Activated CD8-positive, alpha-beta T cell treated with anti-CD3 and anti-CD28 coated beads for 36 hours (primary cell): ENCODE measurements at regions of chr16 and their contacts with region 1.

Region 1: DNA sequence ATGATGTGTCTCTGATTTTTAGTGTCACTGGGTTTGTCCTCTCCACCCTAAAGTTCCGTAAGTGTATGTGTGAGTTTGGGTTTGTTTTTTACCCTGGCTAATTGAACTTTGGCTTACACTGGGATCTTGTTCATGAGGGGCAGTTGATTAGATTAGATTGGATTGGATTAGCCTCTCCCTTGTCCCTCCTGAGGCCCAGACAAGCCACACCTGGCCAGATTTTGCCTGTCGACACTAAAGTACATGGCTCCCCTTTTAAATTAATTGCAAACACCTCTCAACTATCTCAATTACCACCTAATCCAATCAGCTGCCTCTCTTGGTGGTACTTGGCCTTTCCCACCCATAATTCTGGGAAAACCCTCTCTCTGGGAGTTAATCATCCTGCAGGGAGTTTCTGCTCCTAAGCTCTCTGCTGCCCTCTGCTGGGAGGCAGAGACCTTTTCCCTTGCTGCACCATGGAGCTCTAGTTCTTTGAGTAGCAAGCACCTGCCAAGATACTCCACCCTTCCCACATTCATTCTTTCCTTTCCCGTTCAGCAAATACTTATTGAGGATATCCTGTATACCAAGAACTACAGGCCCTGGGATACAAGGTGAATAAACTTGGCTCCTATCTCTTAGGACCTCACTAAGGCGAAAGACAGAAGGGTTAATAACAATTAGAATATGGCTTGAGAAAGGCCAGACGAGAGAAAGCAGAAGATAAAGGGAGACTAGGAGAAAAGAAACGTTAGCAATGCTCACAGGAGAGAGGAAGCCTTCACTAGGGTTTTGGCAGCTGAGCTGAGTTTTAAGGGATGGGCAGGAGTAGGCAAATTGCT is 60.0 kb upstream of the MPHOSPH6 start:
- DNase-seq: peak; percentile 73
- ATAC-seq: no peak
- H3K4me3 Mint-ChIP-seq: no peak overlapping the region
- H3K27ac Mint-ChIP-seq: no peak overlapping the region
- H3K4me1 Mint-ChIP-seq: no peaks in the 10 kb centered on the region
- H3K27me3 Mint-ChIP-seq: peaks cover 12% of the 10 kb centered on the region
- CTCF ChIP-seq: peak; percentile 98

Region 2: DNA sequence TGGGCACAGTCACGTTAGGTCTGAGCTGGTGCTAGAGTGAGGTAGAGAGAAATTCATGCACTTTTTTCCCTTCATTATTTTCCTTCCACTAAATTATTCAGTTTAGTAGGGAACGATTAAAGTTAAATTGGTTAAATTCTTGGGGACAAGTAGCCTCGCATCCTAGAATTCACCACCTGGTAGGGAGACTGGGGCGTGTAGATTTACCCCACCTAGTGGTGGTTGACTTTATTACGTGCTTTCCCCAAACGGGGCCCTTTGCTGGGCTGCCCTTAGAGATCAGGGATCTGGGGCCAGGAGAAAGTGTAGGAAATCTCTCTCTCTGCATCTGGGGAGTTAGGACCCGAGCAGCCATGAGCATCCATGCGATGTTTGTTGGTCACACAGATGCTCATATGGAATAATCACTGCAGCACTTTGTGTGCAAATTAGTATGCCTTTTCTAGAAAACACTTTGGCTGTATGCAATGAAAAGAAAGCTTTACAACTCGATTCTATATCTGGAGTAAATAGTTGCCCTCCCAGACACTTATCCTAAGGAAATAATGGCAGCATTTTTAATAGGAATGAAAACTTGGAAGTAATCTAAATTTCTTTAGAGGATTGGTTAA is 343.9 kb before region 1 on chr16:
- CTCF ChIA-PET with region 1: interaction called, 14 read pairs
- POLR2A ChIA-PET with region 1: no interaction called
- intact Hi-C with region 1: loop called (anchors 5 kb)
- DNase-seq: peak; percentile 22
- ATAC-seq: peak; percentile 81
- H3K4me3 Mint-ChIP-seq: no peak overlapping the region
- H3K27ac Mint-ChIP-seq: no peak overlapping the region
- H3K4me1 Mint-ChIP-seq: no peaks in the 10 kb centered on the region
- H3K27me3 Mint-ChIP-seq: no peaks in the 10 kb centered on the region
- CTCF ChIP-seq: peak; percentile 83

Region 3: GRCh38 chr16:81891736-81892357 is 338.2 kb before region 1 on chr16:
- CTCF ChIA-PET with region 1: interaction called, 14 read pairs
- POLR2A ChIA-PET with region 1: no interaction called
- intact Hi-C with region 1: loop called (anchors 5 kb)
- DNase-seq: no peak
- ATAC-seq: no peak
- H3K4me3 Mint-ChIP-seq: no peak overlapping the region
- H3K27ac Mint-ChIP-seq: no peak overlapping the region
- H3K4me1 Mint-ChIP-seq: no peaks in the 10 kb centered on the region
- H3K27me3 Mint-ChIP-seq: no peaks in the 10 kb centered on the region
- CTCF ChIP-seq: no peak

Region 4: DNA sequence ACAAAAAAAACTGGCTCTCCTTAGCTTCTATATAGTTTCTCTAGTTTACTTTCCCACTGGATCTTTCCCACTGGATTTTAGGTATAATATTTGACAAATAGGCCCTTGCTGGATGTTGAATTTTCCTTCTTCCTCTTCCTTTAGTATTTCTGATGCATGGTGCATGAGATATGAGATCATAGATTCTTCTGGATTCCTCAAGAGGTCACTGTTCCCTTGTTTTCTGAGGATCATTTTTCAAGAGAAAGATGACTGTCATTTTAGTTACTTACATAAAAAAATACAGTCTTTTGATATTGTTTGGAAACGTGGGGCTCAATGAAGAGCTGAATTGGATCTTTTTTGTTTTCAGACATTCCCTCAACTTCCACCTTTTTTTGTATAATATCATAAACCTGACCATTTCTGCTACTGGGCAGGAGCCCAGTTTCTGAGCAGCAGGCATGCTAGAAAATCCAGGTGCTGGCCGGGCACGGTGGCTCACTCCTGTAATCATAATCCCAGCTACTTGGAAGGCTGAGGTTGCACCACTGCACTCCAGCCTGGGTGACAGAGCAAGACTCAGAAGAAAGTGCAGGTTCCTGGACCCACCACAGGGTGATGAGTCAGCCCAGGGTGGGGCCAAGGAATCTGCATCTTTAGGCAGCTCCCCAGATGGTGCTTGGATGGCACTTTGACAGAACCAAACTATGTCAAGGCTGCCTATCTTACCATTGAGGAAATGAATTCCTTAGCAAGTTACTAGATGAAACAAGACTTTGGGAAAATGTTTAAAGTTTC is 289.0 kb before region 1 on chr16:
- CTCF ChIA-PET with region 1: interaction called, 6 read pairs
- POLR2A ChIA-PET with region 1: no interaction called
- intact Hi-C with region 1: loop called (anchors 10 kb)
- DNase-seq: peak; percentile 7
- ATAC-seq: no peak
- H3K4me3 Mint-ChIP-seq: no peak overlapping the region
- H3K27ac Mint-ChIP-seq: no peak overlapping the region
- H3K4me1 Mint-ChIP-seq: no peaks in the 10 kb centered on the region
- H3K27me3 Mint-ChIP-seq: no peaks in the 10 kb centered on the region
- CTCF ChIP-seq: peak; percentile 50

Region 5: DNA sequence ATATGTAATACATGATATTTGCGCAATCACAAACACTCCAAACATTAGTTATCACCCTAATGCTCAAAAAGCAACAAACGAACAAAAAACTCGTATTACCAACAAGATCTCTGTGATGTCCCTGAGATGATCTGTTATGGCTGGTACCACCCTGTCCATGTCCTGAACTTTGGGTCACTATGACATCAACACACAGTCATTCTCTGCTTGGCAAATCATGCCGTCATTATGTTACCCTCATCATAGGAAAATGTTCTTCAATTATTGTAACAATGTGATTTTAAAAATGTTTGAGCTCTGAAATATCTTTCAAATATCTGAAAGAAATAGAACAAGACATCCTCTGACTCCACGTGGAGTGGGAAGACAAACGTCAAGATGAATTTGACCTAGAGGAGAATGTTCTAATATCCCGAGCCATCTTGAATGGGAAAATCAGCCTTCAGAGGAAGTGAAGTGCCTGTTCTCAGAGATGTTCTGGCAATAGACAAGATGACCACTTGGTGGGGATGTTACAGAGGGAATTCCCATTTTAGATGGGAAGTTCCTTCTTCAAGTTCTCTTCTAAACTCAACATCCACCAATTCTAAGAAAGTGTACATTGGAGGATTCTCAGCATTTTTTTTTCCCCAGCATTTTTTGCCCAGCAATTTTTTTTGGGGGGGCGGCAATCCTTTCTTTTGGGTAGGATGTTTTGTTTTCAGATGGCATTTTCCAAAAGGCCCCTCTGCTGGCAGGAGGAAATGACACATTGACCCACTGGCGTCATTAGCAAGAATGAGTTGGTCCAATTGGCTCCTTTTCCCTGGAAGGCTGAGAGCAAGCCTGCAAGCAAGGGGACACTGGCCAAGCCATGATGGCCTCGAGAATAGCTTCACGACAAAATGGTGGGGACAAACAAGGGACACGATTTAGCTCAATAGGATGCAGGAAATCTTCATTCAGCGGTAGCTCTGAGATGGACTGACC is 198.6 kb before region 1 on chr16:
- CTCF ChIA-PET with region 1: interaction called, 8 read pairs
- POLR2A ChIA-PET with region 1: no interaction called
- intact Hi-C with region 1: loop called (anchors 10 kb)
- DNase-seq: no peak
- ATAC-seq: no peak
- H3K4me3 Mint-ChIP-seq: no peak overlapping the region
- H3K27ac Mint-ChIP-seq: no peak overlapping the region
- H3K4me1 Mint-ChIP-seq: no peaks in the 10 kb centered on the region
- H3K27me3 Mint-ChIP-seq: peaks cover 6% of the 10 kb centered on the region
- CTCF ChIP-seq: peak; percentile 27

Region 6: GRCh38 chr16:82169861-82170845 is 59.9 kb before region 1 on chr16 and contains the start of gene MPHOSPH6:
- CTCF ChIA-PET with region 1: interaction called, 18 read pairs
- POLR2A ChIA-PET with region 1: no interaction called
- intact Hi-C with region 1: no loop called
- DNase-seq: peak; percentile 91
- ATAC-seq: peak; percentile 96
- H3K4me3 Mint-ChIP-seq: peak within 1 kb of the TSS; percentile 88
- H3K27ac Mint-ChIP-seq: peak within 1 kb of the TSS; percentile 99
- H3K4me1 Mint-ChIP-seq: peaks cover 31% of the 10 kb centered on the region
- H3K27me3 Mint-ChIP-seq: peaks cover 10% of the 10 kb centered on the region
- CTCF ChIP-seq: no peak
- total RNA-seq, gene MPHOSPH6: 46.9 to 51.2 TPM

Region 7: DNA sequence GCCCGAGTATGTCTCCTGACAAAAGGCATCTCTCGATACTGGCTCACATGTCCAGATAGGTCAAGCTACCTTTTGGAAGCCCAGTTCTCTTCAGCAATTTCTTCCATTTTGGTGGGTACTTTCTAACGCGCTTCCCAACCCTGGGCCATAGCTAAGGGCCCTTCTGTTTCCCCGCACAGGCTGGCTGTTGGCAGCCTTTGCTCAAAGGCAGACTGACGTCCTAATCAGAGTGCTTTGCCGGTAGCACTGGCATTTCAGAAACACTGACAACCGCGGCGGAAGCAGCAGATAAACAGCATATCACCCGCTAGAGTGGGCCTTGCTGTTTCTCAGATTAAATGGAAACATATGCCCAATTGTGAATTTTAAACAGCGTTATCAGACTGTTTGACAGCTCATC is 10.7 kb before region 1 on chr16:
- CTCF ChIA-PET with region 1: interaction called, 11 read pairs
- POLR2A ChIA-PET with region 1: no interaction called
- intact Hi-C with region 1: no loop called
- DNase-seq: no peak
- ATAC-seq: no peak
- H3K4me3 Mint-ChIP-seq: no peak overlapping the region
- H3K27ac Mint-ChIP-seq: no peak overlapping the region
- H3K4me1 Mint-ChIP-seq: no peaks in the 10 kb centered on the region
- H3K27me3 Mint-ChIP-seq: peaks cover 11% of the 10 kb centered on the region
- CTCF ChIP-seq: no peak

Region 8: DNA sequence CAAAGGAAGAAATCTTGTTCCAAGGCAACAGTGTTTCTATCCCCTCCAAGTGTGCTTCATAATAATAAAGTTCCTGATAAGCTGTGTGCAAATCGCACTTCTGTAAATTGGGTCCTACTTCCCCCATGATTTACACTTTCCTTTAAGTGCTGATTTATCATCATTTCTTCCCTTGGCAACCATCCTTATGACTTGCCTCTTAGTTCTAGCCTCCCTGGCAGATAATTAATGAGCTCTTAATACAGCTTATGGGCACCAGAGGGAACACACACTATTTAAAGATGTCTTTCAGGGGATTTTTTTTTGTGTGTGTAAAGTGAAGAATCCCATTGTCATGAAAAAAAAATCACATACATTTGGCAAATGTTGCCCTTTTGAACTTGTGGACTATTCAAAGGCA is 41.6 kb after region 1 on chr16:
- CTCF ChIA-PET with region 1: no interaction called
- POLR2A ChIA-PET with region 1: no interaction called
- intact Hi-C with region 1: no loop called
- DNase-seq: no peak
- ATAC-seq: no peak
- H3K4me3 Mint-ChIP-seq: no peak overlapping the region
- H3K27ac Mint-ChIP-seq: no peak overlapping the region
- H3K4me1 Mint-ChIP-seq: no peaks in the 10 kb centered on the region
- H3K27me3 Mint-ChIP-seq: peaks cover 25% of the 10 kb centered on the region
- CTCF ChIP-seq: no peak

Region 9: GRCh38 chr16:82425661-82426060 is 195.7 kb after region 1 on chr16:
- CTCF ChIA-PET with region 1: no interaction called
- POLR2A ChIA-PET with region 1: no interaction called
- intact Hi-C with region 1: no loop called
- DNase-seq: no peak
- ATAC-seq: no peak
- H3K4me3 Mint-ChIP-seq: no peak overlapping the region
- H3K27ac Mint-ChIP-seq: no peak overlapping the region
- H3K4me1 Mint-ChIP-seq: no peaks in the 10 kb centered on the region
- H3K27me3 Mint-ChIP-seq: peaks cover 13% of the 10 kb centered on the region
- CTCF ChIP-seq: no peak